Endothelial cell of umbilical vein (primary cell): ENCODE measurements at regions of chr20 and their contacts with region 1.

Region 1: DNA sequence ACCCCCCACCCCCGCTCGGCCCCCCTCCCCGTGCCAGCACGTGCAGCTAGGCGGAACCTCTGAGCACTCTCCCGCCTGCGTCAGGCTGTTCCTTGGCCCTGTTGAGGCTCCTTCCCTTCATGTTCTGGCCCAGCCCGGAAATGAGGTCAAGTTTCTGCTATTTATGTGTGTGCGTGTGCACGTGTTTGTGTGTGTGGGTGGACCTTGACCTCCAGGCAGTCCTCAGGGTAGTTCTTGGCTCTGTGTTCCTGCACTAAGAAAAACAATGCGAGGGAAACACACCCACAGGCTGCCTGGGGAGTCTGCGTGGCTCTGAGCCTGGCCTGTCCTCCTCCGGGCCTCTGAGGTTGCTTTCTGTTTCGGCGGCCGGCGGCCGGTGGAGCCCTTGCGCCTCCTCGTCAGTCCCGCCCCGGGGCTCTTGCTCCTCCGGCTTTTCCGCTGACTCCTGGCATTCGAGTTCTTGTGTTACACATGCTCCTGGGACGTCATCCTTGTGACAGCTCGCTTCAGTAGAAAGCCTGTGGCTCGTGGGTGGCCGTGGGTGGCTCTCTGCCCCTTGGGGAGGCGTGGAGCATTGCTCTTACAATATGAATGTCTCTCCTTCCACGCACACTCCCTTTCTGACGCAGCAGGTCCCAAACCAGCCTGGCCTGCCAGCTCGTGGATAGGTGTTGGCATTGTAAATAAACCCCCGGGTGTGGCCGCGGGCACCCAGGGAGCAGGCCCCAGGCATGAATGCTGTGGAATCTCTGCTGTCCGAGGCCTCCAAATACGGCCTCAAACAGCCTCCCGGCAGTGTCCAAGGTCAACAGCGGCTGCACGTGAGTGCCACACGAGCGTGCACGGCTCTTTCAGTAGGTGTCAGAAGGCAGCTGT is 10.0 kb downstream of the SLCO4A1 start:
- DNase-seq: peak; percentile 96
- H3K4me3 ChIP-seq: no peak overlapping the region
- H3K27ac ChIP-seq: peak overlapping the region; percentile 68
- H3K4me1 ChIP-seq: peaks cover 13% of the 10 kb centered on the region
- H3K27me3 ChIP-seq: no peaks in the 10 kb centered on the region
- CTCF ChIP-seq: no peak
- POLR2A ChIP-seq: no peak

Region 2: GRCh38 chr20:62623488-62624324 is 28.6 kb before region 1 on chr20:
- CTCF ChIA-PET with region 1: no interaction called
- POLR2A ChIA-PET with region 1: no interaction called
- dilution Hi-C with region 1: no loop called
- intact Hi-C with region 1: loop called (anchors 1 kb)
- DNase-seq: peak; percentile 93
- H3K4me3 ChIP-seq: peak overlapping the region in 1 of 3 experiments; percentile 1
- H3K27ac ChIP-seq: peak overlapping the region; percentile 85
- H3K4me1 ChIP-seq: peaks cover 23% of the 10 kb centered on the region
- H3K27me3 ChIP-seq: no peaks in the 10 kb centered on the region
- CTCF ChIP-seq: no peak
- POLR2A ChIP-seq: peak; percentile 81

Region 3: GRCh38 chr20:62663129-62664018 is 11.1 kb after region 1 on chr20:
- CTCF ChIA-PET with region 1: interaction called, 3 read pairs
- POLR2A ChIA-PET with region 1: no interaction called
- dilution Hi-C with region 1: no loop called
- intact Hi-C with region 1: loop called (anchors 1 kb)
- DNase-seq: no peak
- H3K4me3 ChIP-seq: no peak overlapping the region
- H3K27ac ChIP-seq: no peak overlapping the region
- H3K4me1 ChIP-seq: peaks cover 13% of the 10 kb centered on the region
- H3K27me3 ChIP-seq: no peaks in the 10 kb centered on the region
- CTCF ChIP-seq: no peak
- POLR2A ChIP-seq: no peak

Region 4: GRCh38 chr20:62688855-62689460 is 36.7 kb after region 1 on chr20:
- CTCF ChIA-PET with region 1: no interaction called
- POLR2A ChIA-PET with region 1: no interaction called
- dilution Hi-C with region 1: no loop called
- intact Hi-C with region 1: no loop called
- DNase-seq: peak; percentile 52
- H3K4me3 ChIP-seq: no peak overlapping the region
- H3K27ac ChIP-seq: no peak overlapping the region
- H3K4me1 ChIP-seq: no peaks in the 10 kb centered on the region
- H3K27me3 ChIP-seq: peaks cover 0 to 2% of the 10 kb centered on the region in 2 experiments
- CTCF ChIP-seq: peak; percentile 27 to 51
- POLR2A ChIP-seq: no peak